Motor neuron (in vitro differentiated cells): ENCODE measurements at regions of chr10 and their contacts with region 1.

Region 1: GRCh38 chr10:60646966-60647796 is 131.1 kb upstream of the CDK1 start:
- ATAC-seq: peak in 6 of 8 experiments; percentile 29 to 53 (median 36)
- H3K4me3 ChIP-seq: no peak overlapping the region
- H3K27ac ChIP-seq: no peak overlapping the region
- H3K4me1 ChIP-seq: peaks cover 0 to 9% of the 10 kb centered on the region in 2 donors

Region 2: DNA sequence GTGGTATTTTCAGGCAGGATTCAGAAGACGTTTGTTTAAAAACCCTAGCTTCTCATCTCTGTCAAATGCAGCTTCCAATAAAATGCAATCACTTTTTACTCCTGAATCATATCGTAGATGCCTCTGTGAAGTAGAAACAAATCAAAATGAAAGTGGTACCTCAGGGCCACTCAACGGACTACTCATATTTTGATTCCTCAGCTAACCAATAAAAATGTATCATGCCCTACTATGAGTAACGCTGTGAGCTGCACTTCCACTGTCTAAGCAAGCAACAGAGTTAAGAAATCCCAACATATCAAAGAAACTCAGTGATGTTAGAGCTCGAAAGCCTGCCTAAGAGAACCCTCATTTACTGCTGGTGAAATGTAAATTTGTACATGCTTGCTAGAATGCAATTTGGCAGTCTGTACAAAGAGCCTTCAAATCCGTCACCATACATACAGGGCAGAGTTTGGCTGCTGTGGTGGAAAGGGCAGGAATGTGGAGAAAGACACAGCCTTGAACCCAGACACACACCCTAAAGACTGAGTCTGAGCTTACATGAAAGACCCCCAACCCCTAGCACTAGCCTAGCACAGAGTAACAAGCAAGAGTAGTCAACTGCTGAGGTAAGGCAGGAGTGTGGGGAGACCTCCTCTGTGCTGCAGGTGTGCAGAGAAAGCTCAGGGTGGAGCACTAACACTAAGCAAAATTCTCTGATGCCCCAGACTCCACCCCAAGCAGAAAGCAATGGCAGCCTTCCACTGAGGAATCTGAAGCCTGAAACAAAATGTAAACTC is 409.0 kb before region 1 on chr10:
- in situ Hi-C with region 1: loop called in 1 of 9 experiments (anchors 25 kb)
- ATAC-seq: peak in 7 of 8 experiments; percentile 49 to 99 (median 80)
- H3K4me3 ChIP-seq: no peak overlapping the region
- H3K27ac ChIP-seq: no peak overlapping the region
- H3K4me1 ChIP-seq: peaks cover 0 to 6% of the 10 kb centered on the region in 2 donors

Region 3: DNA sequence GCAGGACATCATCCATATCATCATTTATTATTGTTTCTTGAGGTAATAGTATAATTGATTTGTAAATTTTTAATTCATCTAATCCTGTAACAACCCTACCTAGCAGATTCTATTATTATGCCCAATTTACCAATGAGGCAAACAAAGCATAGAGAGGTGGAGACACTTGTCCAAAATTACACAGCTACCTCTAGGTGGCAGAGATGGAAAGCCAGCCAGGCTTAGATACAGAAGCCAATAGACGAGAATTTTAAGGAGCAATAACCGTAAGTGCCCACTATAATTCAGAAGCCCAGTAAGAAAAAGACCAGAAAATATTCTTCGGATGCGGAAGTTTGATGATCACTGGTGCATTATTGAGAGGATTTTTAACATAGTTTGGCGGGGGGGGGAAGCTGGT is 311.5 kb before region 1 on chr10:
- in situ Hi-C with region 1: no loop called
- ATAC-seq: no peak
- H3K4me3 ChIP-seq: no peak overlapping the region
- H3K27ac ChIP-seq: no peak overlapping the region
- H3K4me1 ChIP-seq: peaks cover 13 to 29% of the 10 kb centered on the region in 2 donors

Region 4: GRCh38 chr10:60444494-60445064 is 202.6 kb before region 1 on chr10:
- in situ Hi-C with region 1: loop called in 4 of 9 experiments (anchors 10 to 25 kb)
- ATAC-seq: no peak
- H3K4me3 ChIP-seq: no peak overlapping the region
- H3K27ac ChIP-seq: no peak overlapping the region
- H3K4me1 ChIP-seq: peaks cover 4 to 6% of the 10 kb centered on the region in 2 donors

Region 5: DNA sequence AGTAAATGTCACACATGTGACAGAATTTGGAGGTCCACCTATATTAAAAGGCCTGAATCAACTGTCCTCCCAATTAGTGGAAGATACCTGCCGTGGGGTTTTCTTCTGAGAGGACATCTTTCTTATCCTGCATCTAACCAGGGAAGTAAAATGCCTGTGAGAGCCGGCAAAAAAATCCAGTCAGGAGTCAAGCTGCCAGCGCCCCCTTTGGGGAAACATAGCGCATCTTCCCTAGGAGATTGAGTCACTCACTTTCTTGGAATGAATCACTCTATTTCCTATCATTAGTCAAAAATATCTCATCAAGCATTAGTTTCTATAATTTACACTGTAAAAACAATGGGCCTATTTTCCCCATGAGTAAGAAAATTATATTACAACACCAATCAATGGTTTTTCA is 191.1 kb before region 1 on chr10:
- in situ Hi-C with region 1: loop called in 1 of 9 experiments (anchors 25 kb)
- ATAC-seq: peak in 2 of 8 experiments; percentile 28 to 56
- H3K4me3 ChIP-seq: no peak overlapping the region
- H3K27ac ChIP-seq: no peak overlapping the region
- H3K4me1 ChIP-seq: peaks cover 10 to 12% of the 10 kb centered on the region in 2 donors

Region 6: DNA sequence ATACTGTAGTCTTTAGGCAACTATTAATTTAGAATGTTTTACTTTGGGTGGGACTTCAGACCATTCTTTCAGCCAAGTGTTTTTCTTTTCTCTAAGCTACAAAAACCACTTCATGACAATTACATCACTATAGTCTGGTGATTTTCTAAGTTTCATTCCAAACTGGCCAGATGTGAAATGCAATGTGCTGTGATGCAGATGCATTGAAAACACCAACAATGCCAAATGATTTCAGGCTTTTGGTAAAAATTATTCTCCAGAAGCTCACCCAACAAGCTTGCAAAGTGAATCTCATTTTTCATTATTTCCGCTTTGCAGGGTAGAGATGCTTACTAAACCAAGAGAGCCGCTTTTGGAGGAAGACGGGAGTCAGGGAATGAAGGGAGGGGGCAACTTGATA is 139.1 kb before region 1 on chr10:
- in situ Hi-C with region 1: no loop called
- ATAC-seq: peak in 1 of 8 experiments; percentile 45
- H3K4me3 ChIP-seq: no peak overlapping the region
- H3K27ac ChIP-seq: no peak overlapping the region
- H3K4me1 ChIP-seq: peaks cover 9 to 22% of the 10 kb centered on the region in 2 donors